ENCODE measurements at regions of chr18 and their contacts with region 1.

Region 1: GRCh38 chr18:24118750-24119577 is 19.9 kb upstream of the CABYR start:
- DNase-seq: peak; percentile 61
- H3K4me3 Mint-ChIP-seq: no peak overlapping the region
- H3K27ac Mint-ChIP-seq: peak overlapping the region; percentile 44
- H3K4me1 Mint-ChIP-seq: peaks cover 31% of the 10 kb centered on the region
- H3K27me3 Mint-ChIP-seq: no peaks in the 10 kb centered on the region

Region 2: DNA sequence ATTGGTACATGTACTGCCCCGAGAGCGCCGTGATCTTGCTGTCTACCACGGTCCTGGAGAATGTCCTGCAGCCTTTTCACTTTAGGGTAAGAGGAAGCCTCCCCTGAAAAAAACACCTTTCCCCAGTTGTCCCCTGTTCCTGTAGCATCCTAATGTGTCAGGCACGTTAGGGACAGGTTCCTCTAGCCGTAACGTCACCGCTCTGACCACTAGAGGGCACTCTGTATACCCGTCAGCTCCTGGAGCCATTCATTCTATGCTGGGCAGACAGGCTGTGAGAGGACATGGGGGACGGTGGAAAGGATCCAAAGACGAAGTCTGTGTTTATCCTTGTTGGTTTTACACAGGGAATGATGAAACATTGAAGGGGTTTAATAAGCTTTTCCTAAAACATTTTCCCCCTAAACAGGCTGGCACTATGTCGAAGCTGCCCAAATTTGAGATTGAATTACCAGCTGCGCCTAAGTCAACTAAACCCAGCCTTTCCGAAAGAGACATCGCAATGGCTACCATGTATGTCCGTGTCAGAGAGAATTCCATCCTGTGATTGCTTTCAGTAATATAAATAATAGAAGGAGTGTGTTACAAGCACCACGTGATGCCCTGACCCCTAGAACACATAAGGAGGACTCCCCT is 602.9 kb before region 1 on chr18:
- intact Hi-C with region 1: loop called (anchors 5 kb)
- DNase-seq: peak; percentile 61
- H3K4me3 Mint-ChIP-seq: no peak overlapping the region
- H3K27ac Mint-ChIP-seq: peak overlapping the region; percentile 3
- H3K4me1 Mint-ChIP-seq: peaks cover 35% of the 10 kb centered on the region
- H3K27me3 Mint-ChIP-seq: no peaks in the 10 kb centered on the region

Region 3: GRCh38 chr18:23812546-23813440 is 306.2 kb before region 1 on chr18:
- intact Hi-C with region 1: loop called (anchors 2 kb)
- DNase-seq: no peak
- H3K4me3 Mint-ChIP-seq: no peak overlapping the region
- H3K27ac Mint-ChIP-seq: no peak overlapping the region
- H3K4me1 Mint-ChIP-seq: peaks cover 23% of the 10 kb centered on the region
- H3K27me3 Mint-ChIP-seq: peaks cover 23% of the 10 kb centered on the region

Region 4: GRCh38 chr18:23918401-23919032 is 200.4 kb before region 1 on chr18:
- intact Hi-C with region 1: loop called (anchors 1 kb)
- DNase-seq: peak; percentile 54
- H3K4me3 Mint-ChIP-seq: no peak overlapping the region
- H3K27ac Mint-ChIP-seq: no peak overlapping the region
- H3K4me1 Mint-ChIP-seq: peaks cover 29% of the 10 kb centered on the region
- H3K27me3 Mint-ChIP-seq: peaks cover 26% of the 10 kb centered on the region

Region 5: DNA sequence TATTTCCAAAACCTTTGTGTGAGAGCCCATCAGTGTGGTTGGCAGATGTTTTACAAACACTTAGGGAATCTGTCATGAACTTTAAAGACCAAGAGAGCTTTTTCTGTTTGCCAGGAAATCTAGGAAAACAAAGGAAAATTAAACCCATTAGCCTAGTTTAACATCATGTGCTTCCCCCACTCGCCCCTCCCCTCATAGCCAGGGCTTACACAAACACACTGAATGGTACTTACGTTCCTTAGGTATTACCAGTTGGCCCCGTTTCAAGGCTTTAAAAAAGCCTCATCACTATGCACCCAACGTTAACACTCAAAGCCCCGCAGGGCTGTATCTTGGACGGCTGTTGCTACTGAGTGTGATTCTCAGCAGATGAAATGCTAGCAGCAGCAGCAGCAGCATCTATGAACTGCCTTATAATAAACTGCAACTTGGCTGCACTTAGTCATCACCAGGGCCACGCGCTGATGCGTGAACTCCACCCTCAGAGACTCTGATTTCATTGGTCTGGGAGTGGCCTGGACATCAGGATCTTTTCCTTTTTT is 124.5 kb before region 1 on chr18:
- intact Hi-C with region 1: no loop called
- DNase-seq: no peak
- H3K4me3 Mint-ChIP-seq: no peak overlapping the region
- H3K27ac Mint-ChIP-seq: no peak overlapping the region
- H3K4me1 Mint-ChIP-seq: peaks cover 35% of the 10 kb centered on the region
- H3K27me3 Mint-ChIP-seq: peaks cover 2% of the 10 kb centered on the region

Region 6: GRCh38 chr18:24019641-24020331 is 99.2 kb before region 1 on chr18:
- intact Hi-C with region 1: loop called (anchors 1 kb)
- DNase-seq: peak; percentile 71
- H3K4me3 Mint-ChIP-seq: peak overlapping the region; percentile 80
- H3K27ac Mint-ChIP-seq: peak overlapping the region; percentile 92
- H3K4me1 Mint-ChIP-seq: peaks cover 90% of the 10 kb centered on the region
- H3K27me3 Mint-ChIP-seq: no peaks in the 10 kb centered on the region

Region 7: DNA sequence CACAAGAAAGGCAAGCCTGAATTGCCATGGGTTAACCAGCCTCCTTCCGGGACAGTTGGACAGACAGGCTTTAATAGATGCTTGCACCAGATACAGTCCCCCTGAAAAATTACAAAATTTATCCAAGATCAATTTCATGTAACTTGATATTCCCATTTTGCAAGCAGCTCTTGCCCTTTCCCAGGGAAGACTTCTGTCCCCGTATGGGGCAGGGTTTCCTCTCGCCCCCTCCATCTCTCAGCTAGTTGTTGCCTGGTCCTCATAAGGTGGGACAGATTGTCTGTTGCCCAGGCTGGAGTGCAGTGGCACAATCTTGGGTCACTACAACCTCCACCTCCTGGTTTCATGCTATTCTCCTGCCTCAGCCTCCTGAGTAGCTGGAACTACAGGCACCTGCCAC is 43.2 kb before region 1 on chr18:
- intact Hi-C with region 1: loop called (anchors 1 kb)
- DNase-seq: no peak
- H3K4me3 Mint-ChIP-seq: no peak overlapping the region
- H3K27ac Mint-ChIP-seq: peak overlapping the region; percentile 58
- H3K4me1 Mint-ChIP-seq: peaks cover 41% of the 10 kb centered on the region
- H3K27me3 Mint-ChIP-seq: no peaks in the 10 kb centered on the region

Region 8: DNA sequence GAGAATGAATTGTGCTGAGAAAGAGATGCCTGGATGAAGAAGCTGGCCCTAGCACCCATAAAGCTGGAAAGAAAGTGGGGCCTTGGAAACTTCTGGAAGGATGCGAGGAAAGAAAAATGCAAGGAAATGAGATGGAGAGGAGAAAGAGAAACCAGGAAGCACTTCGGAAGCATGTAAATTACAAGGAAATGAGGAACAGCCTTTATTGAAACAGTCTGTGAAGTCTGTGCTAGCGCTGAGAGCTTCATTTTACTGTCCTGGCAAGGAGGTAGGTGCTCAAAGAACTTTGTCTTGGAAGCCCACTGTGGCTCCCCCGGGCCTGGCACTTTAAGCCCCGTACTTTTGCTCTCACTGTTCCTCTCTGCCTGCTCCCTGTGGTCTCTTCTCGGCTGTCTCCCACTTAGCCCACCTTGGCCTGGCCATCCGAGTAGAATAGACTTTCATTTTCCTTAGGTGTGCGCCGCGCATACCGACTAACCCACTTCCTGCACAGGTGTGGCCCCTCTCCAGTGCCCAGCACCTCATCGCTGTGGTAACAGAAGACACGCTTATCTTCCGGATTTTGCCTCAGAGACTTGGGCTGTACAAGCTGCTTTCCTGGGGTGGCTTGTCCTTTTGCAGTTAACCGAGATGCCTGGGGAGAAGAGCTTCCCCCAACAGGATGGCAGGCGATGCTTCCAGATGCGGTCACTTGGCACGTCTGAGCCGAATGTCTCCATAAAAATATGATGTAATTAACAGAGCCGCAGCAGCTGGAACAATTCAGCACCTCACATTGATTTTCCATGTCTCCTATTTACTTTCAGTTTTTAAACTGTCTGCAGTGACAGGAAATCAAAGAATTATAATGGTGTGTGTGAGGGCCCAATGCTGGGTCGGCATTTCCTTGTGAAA is 541.1 kb after region 1 on chr18:
- intact Hi-C with region 1: no loop called
- DNase-seq: peak; percentile 16
- H3K4me3 Mint-ChIP-seq: peak overlapping the region; percentile 72
- H3K27ac Mint-ChIP-seq: no peak overlapping the region
- H3K4me1 Mint-ChIP-seq: peaks cover 12% of the 10 kb centered on the region
- H3K27me3 Mint-ChIP-seq: peaks cover 2% of the 10 kb centered on the region